ENCODE measurements at regions of chr12 and their contacts with region 1.

Region 1: GRCh38 chr12:91355150-91356006 is 172.8 kb upstream of the DCN start:
- DNase-seq: peak; percentile 73
- H3K4me3 ChIP-seq: no peak overlapping the region
- H3K27ac ChIP-seq: peak overlapping the region in 4 of 8 donors; percentile 3 to 51 (median 22)
- H3K4me1 ChIP-seq: peaks cover 0 to 5% (median 0%) of the 10 kb centered on the region in 6 donors
- H3K27me3 ChIP-seq: no peaks in the 10 kb centered on the region
- CTCF ChIP-seq: peak; percentile 32 to 75 (median 67)
- POLR2A ChIP-seq: no peak

Region 2: DNA sequence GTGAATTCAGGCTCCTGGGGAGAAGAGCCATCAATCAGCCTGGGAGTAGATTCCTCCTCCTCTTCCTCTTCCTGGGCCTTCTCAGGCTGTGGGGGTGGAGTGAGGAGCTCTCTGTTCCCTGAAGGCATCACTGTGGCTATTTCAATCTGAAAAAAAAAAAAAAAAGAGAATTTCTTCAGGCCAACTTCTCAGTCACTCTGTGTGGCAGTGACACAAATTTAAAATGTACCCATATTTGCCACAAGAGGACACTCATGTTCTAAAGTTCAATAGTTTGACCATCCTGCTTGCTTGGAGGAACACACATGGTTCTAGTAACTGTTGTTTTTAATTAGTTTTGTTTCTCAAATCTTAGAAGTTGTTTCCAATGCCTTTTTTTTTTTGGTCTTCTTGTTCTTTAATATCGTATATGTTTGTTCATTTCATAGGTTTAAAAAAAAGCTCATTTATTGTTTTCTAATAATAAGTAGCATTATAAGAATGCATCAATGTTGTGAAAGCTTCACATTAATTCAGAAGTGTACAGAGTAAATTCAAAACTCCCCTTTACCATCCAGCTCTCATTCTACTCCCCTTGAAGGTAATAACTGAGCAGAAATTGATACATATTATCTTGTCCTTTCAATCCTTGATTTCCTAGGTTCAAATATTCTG is 377.1 kb before region 1 on chr12:
- intact Hi-C with region 1: loop called (anchors 10 kb)
- DNase-seq: no peak
- H3K4me3 ChIP-seq: no peak overlapping the region
- H3K27ac ChIP-seq: no peak overlapping the region
- H3K4me1 ChIP-seq: no peaks in the 10 kb centered on the region
- H3K27me3 ChIP-seq: no peaks in the 10 kb centered on the region
- CTCF ChIP-seq: peak in 6 of 11 experiments; percentile 20 to 51 (median 40)
- POLR2A ChIP-seq: no peak

Region 3: GRCh38 chr12:91239481-91239880 is 115.9 kb before region 1 on chr12:
- intact Hi-C with region 1: no loop called
- DNase-seq: no peak
- H3K4me3 ChIP-seq: no peak overlapping the region
- H3K27ac ChIP-seq: no peak overlapping the region
- H3K4me1 ChIP-seq: no peaks in the 10 kb centered on the region
- H3K27me3 ChIP-seq: no peaks in the 10 kb centered on the region
- CTCF ChIP-seq: no peak
- POLR2A ChIP-seq: no peak

Region 4: GRCh38 chr12:92145731-92146496 is 790.5 kb after region 1 on chr12 and contains the start of gene BTG1:
- intact Hi-C with region 1: no loop called
- DNase-seq: peak; percentile 99
- H3K4me3 ChIP-seq: peak within 1 kb of the TSS; percentile 40 to 90 (median 77)
- H3K27ac ChIP-seq: peak within 1 kb of the TSS; percentile 97 to 100 (median 100)
- H3K4me1 ChIP-seq: peaks cover 0 to 51% (median 24%) of the 10 kb centered on the region in 6 donors
- H3K27me3 ChIP-seq: no peaks in the 10 kb centered on the region
- CTCF ChIP-seq: peak in 2 of 11 experiments; percentile 7 to 31
- POLR2A ChIP-seq: peak; percentile 99 to 100 (median 100)
- total RNA-seq, gene BTG1: 171 to 358 (median 256) TPM